PC-9 (cell line): ENCODE measurements at regions of chr1 and their contacts with region 1.

Region 1: GRCh38 chr1:39158327-39159086 is 46.0 kb upstream of the MACF1 start:
- DNase-seq: peak; percentile 42 to 58
- H3K4me3 ChIP-seq: no peak overlapping the region
- H3K27ac ChIP-seq: peak overlapping the region; percentile 59
- H3K4me1 ChIP-seq: peaks cover 67% of the 10 kb centered on the region
- H3K27me3 ChIP-seq: no peaks in the 10 kb centered on the region
- CTCF ChIP-seq: no peak

Region 2: DNA sequence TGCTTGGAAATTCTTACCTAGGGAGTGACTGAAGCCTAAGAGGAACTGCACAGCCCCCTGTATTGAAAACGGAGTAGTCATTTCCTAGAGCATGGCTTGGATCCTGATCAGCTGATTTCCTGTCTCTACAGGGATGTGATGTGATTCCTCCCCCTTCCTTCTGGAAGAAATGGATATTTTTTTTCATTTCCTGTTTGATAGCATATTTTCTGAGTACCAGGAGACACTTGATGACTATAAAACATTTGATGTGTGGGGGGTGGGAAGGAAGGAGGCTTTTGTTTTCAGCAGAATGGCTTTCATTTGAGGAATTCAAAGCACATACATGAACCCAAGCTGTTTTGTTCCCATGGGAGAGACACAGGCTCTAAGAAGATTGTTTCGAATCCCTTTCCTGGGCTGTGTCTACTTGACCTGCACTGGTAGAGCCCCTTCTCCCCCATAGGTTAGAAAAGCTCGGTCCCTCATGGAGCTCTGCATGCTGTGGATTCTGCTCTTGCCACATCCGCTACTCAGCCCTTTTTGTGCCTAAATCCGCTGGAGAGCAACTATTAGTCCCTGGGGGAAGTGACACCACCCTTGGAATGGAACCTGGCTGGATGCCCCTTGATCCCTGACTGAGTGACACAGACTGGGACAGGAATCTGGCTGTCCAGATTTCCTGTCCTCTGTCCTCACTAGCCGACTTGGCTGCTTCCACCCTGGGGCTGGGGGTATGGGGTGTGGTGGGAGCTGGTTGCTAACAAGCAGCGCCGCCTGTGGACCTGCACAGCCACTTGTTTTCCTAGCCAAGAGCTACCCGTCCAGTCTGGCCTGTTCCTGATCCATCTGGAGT is 25.8 kb before region 1 on chr1:
- CTCF ChIA-PET with region 1: interaction called, 6 read pairs
- POLR2A ChIA-PET with region 1: interaction called, 3 read pairs
- intact Hi-C with region 1: loop called (anchors 1 kb)
- DNase-seq: peak; percentile 94 to 95
- H3K4me3 ChIP-seq: no peak overlapping the region
- H3K27ac ChIP-seq: peak overlapping the region; percentile 77
- H3K4me1 ChIP-seq: peaks cover 70% of the 10 kb centered on the region
- H3K27me3 ChIP-seq: no peaks in the 10 kb centered on the region
- CTCF ChIP-seq: peak; percentile 67

Region 3: DNA sequence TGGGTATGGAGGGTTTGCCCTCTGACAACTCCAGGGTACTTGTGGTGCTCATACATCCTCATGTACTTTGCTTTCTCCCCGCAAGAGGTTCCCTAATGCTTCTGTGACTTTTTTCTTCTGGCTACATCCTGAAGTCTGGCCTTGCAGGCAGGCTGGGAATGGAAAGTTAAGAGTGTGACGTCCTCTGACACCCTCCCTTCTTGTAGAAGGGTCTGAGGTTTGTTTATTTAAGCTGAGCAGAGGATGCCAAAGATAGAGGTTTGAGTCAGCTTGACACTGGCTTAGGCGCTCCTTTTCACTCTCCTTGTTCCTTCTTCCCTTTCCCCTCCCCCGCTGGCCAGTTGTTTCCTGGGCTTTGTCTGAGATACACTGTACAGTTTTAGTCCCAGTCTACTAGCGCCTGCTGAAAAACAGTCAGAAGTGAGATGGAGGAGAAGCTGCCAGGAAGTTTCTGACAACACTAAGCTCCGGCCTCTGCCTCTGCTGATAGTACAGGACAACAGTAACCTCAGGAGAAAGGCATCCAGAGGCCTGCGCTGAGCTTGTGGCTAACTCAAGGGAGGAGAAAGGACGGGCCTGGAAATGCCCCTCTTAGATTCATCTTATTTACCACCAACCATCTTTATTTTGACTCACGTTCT is 46.1 kb after region 1 on chr1 and contains the start of gene MACF1:
- CTCF ChIA-PET with region 1: no interaction called
- POLR2A ChIA-PET with region 1: no interaction called
- intact Hi-C with region 1: no loop called
- DNase-seq: peak in 1 of 2 experiments; percentile 47
- H3K4me3 ChIP-seq: no peak within 1 kb of the TSS
- H3K27ac ChIP-seq: no peak within 1 kb of the TSS
- H3K4me1 ChIP-seq: 0 out of 2 replicates have a peak, but pooled peaks cover 5% of the 10 kb centered on the region
- H3K27me3 ChIP-seq: no peaks in the 10 kb centered on the region
- CTCF ChIP-seq: no peak
- total RNA-seq, gene MACF1: 189 and 199 TPM in 2 replicates

Region 4: GRCh38 chr1:39220891-39221870 is 62.7 kb after region 1 on chr1:
- CTCF ChIA-PET with region 1: no interaction called
- POLR2A ChIA-PET with region 1: no interaction called
- intact Hi-C with region 1: no loop called
- DNase-seq: peak; percentile 28 to 72
- H3K4me3 ChIP-seq: no peak overlapping the region
- H3K27ac ChIP-seq: peak overlapping the region; percentile 36; the same call in 1 of the 2 replicates
- H3K4me1 ChIP-seq: peaks cover 21% of the 10 kb centered on the region
- H3K27me3 ChIP-seq: no peaks in the 10 kb centered on the region
- CTCF ChIP-seq: no peak